Left colon (tissue), 2 donors: ENCODE measurements at regions of chr18 and their contacts with region 1.

Region 1: GRCh38 chr18:77079954-77080682 is 52.5 kb downstream of the MBP start:
- DNase-seq: no peak
- ATAC-seq: no peak

Region 2: GRCh38 chr18:76064998-76065397 is 1015.1 kb before region 1 on chr18:
- intact Hi-C with region 1: no loop called
- DNase-seq: no peak
- ATAC-seq: no peak

Region 3: GRCh38 chr18:77023102-77023782 is 56.9 kb before region 1 on chr18:
- intact Hi-C with region 1: no loop called
- DNase-seq: no peak
- ATAC-seq: no peak

Region 4: GRCh38 chr18:77054606-77055428 is 25.3 kb before region 1 on chr18:
- intact Hi-C with region 1: loop called in 1 of 2 experiments (anchors 2 kb)
- DNase-seq: peak; percentile 80 to 85
- ATAC-seq: peak; percentile 57

Region 5: GRCh38 chr18:77124452-77124922 is 44.4 kb after region 1 on chr18:
- intact Hi-C with region 1: no loop called
- DNase-seq: no peak
- ATAC-seq: no peak